Calu3 (cell line): ENCODE measurements at regions of chr13 and their contacts with region 1.

Region 1: GRCh38 chr13:49976314-49977258 is 20.3 kb upstream of the TRIM13 start:
- DNase-seq: peak; percentile 58
- H3K4me3 Mint-ChIP-seq: no peak overlapping the region
- H3K27ac Mint-ChIP-seq: peak overlapping the region; percentile 61
- H3K4me1 Mint-ChIP-seq: peaks cover 7% of the 10 kb centered on the region
- H3K27me3 Mint-ChIP-seq: no peaks in the 10 kb centered on the region
- CTCF ChIP-seq: peak; percentile 59

Region 2: DNA sequence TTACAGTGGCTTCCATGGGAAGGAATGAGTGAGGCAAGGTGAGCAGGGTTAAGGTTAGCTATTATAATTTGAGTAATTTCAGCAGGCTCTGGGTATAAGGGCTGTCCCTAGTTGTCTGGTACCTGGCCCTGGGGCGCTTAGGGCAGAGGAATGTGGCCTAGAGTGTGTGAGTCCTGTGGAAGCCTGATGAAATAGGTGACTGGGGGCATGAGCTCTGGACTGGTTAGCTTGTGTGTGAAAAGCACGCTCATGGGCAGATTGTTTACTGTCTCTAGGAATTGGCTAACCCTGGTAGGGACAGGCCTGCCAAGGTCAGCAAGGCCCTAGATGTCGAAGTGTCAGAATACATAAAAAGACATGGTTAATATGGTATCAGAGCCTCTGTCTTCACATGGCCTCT is 83.0 kb before region 1 on chr13:
- CTCF ChIA-PET with region 1: no interaction called
- intact Hi-C with region 1: no loop called
- DNase-seq: no peak
- H3K4me3 Mint-ChIP-seq: no peak overlapping the region
- H3K27ac Mint-ChIP-seq: no peak overlapping the region
- H3K4me1 Mint-ChIP-seq: no peaks in the 10 kb centered on the region
- H3K27me3 Mint-ChIP-seq: no peaks in the 10 kb centered on the region
- CTCF ChIP-seq: no peak

Region 3: DNA sequence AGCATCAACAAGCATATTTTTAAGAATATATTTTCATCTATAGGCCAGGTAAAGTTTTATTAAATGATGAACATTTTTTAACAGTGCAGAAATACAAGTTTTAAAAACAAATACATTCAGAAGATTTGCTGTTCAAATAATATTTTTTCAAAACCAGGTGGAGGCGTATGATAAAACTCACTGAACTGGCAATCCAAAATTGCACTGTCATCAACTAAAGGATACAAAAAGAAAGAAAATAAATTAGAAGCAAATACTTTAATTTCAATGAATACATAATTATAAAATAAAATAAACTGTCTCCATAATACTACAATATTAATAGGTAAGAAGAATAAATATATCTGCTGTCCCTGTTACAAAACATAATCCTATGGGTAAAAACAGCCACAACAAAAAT is 61.6 kb before region 1 on chr13:
- CTCF ChIA-PET with region 1: no interaction called
- intact Hi-C with region 1: no loop called
- DNase-seq: no peak
- H3K4me3 Mint-ChIP-seq: no peak overlapping the region
- H3K27ac Mint-ChIP-seq: no peak overlapping the region
- H3K4me1 Mint-ChIP-seq: no peaks in the 10 kb centered on the region
- H3K27me3 Mint-ChIP-seq: no peaks in the 10 kb centered on the region
- CTCF ChIP-seq: no peak

Region 4: GRCh38 chr13:50531917-50532899 is 555.6 kb after region 1 on chr13:
- CTCF ChIA-PET with region 1: no interaction called
- intact Hi-C with region 1: loop called (anchors 5 kb)
- DNase-seq: no peak
- H3K4me3 Mint-ChIP-seq: no peak overlapping the region
- H3K27ac Mint-ChIP-seq: no peak overlapping the region
- H3K4me1 Mint-ChIP-seq: peaks cover 11% of the 10 kb centered on the region
- H3K27me3 Mint-ChIP-seq: no peaks in the 10 kb centered on the region
- CTCF ChIP-seq: no peak

Region 5: DNA sequence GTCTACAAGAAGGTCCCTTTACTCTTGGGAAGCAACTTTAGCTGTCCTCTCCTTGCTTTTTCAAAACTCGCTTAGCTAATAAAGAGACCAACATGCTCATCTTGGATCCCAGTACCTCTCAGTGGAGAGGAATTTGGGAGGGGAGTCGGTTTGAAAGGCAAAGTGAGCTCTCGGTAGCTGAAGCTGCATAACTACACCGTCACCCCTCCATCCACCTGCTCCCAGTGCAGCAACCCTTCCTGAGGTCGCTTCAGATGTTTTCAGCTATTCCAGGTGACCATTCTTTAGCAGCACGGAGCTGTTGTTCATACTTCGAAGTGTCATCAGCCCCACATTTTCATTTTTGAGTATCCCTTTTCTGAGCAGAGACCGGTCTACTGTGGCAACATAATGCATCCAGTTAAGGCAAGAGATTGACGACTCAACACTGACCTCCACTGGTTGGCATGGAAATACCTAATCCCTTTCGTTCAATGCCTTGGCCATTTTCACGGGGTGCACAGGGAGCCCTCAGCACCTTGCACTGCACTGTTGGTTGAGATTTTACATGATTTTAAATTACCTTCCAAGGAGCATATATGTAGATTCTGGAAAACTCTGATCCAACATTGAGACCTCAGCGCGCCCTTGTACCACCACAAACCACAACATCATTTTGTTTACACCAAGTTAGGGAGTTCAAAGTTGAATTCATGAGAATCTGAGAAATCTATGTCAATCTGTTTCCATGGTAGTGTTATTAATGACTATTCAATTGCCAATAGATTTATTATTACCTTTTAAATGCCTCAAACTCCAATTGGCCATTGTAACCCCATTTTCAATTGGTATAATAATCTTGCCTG is 824.7 kb after region 1 on chr13:
- CTCF ChIA-PET with region 1: no interaction called
- intact Hi-C with region 1: loop called (anchors 10 kb)
- DNase-seq: peak; percentile 63
- H3K4me3 Mint-ChIP-seq: no peak overlapping the region
- H3K27ac Mint-ChIP-seq: no peak overlapping the region
- H3K4me1 Mint-ChIP-seq: no peaks in the 10 kb centered on the region
- H3K27me3 Mint-ChIP-seq: peaks cover 14% of the 10 kb centered on the region
- CTCF ChIP-seq: peak; percentile 35

Region 6: DNA sequence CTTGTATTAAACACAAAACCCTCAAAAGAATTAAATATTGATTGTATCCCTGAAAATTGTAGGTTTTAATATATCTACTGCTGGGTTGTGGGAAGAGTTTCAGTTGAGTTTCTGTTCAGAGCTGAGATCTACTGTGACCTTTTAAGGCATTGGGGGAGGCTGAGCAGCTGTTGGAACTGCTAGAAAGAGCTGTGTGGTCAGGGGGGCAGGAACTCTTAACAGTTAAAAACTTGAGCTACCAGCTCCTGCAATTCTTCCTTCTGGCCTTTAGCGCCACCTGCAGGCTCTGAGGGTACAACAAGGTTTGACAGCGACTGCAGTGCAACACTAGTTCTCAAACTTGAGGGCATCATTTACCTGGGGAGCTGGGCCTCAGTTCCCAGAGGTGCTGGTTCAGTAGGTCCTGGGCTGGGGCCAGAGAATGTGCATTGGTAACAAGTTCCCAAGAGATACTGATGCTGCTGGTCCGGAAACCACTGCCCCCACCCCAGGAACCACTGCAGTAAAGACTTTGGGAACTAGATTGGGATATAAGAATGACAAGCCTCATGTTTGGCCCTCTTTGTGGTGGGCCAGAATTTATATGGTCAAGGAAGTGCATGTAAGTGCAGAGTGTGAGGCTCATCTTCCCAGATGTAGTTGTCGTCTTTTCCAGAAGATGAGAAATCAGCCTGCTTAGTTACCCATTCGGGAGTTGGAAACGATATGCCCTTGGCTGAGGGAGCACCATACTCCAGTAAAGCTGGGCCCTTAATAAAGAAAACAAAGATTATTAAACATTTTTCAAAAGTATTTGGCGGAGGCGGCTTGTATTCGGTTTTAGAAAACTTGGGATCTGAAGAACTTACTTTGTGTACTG is 935.6 kb after region 1 on chr13:
- CTCF ChIA-PET with region 1: interaction called, 12 read pairs
- intact Hi-C with region 1: loop called (anchors 10 kb)
- DNase-seq: peak; percentile 81
- H3K4me3 Mint-ChIP-seq: peak overlapping the region; percentile 48
- H3K27ac Mint-ChIP-seq: no peak overlapping the region
- H3K4me1 Mint-ChIP-seq: peaks cover 31% of the 10 kb centered on the region
- H3K27me3 Mint-ChIP-seq: no peaks in the 10 kb centered on the region
- CTCF ChIP-seq: peak; percentile 61

Region 7: DNA sequence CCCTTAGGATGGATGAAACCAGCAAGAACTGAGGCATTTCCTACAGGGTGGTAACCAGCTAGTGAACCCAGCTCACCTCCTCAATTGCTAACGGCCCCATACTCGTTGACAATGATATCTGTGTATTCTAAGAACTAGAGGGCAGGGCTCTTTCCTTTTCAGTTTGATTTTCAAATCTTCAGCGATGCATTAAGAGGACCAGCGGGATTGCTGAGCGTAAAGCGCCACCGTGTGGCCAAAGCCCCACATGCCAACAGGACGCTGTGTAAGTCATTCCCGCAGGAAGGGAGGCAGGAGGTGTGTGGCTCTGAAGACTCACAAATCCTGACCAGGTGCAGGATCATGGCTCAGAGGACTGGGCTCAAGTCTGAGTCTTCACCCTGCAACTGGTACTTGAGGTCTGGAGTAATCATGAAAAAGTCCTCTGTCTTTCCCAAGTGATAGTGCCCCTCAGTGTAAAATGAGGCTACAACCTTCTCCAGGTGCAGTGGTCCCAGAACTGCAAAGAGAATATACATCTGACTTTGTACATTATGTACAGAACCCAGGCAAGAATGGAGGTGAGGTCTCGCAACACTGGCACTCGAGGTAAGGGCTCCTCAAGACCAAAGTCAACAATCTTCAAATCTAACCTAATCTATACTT is 1093.5 kb after region 1 on chr13:
- CTCF ChIA-PET with region 1: no interaction called
- intact Hi-C with region 1: loop called (anchors 5 kb)
- DNase-seq: peak; percentile 72
- H3K4me3 Mint-ChIP-seq: no peak overlapping the region
- H3K27ac Mint-ChIP-seq: no peak overlapping the region
- H3K4me1 Mint-ChIP-seq: peaks cover 8% of the 10 kb centered on the region
- H3K27me3 Mint-ChIP-seq: no peaks in the 10 kb centered on the region
- CTCF ChIP-seq: peak; percentile 61